Activated B cell treated with CpG ODN at 0.5 μM for 24 hours (primary cell): ENCODE measurements at regions of chr9 and their contacts with region 1.

Region 1: DNA sequence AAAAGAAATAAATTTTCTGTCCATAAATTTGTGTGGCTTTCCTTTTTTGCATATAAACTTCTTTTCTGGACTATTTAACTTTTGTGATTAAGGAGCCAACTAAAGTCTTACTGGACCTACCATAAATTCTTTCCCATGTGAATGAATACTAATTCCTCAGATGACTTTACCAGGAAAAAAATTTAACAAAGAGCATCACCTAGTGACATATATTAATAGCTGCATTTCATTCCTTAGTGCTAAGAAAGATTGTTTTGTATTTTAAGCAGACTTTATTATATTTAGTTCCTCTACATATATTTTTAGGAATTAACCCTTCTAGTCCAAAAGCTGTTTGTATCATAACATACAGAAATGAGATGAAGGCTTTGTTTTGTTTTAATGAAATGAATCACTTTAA is 64.4 kb downstream of the C9orf85 start:
- DNase-seq: no peak
- ATAC-seq: no peak
- H3K4me3 Mint-ChIP-seq: no peak overlapping the region
- H3K27ac Mint-ChIP-seq: no peak overlapping the region
- H3K4me1 Mint-ChIP-seq: no peaks in the 10 kb centered on the region
- H3K27me3 Mint-ChIP-seq: no peaks in the 10 kb centered on the region
- CTCF ChIP-seq: no peak

Region 2: GRCh38 chr9:71285191-71285656 is 690.6 kb before region 1 on chr9:
- CTCF ChIA-PET with region 1: no interaction called
- POLR2A ChIA-PET with region 1: no interaction called
- intact Hi-C with region 1: loop called (anchors 10 kb)
- DNase-seq: no peak
- ATAC-seq: peak; percentile 61
- H3K4me3 Mint-ChIP-seq: no peak overlapping the region
- H3K27ac Mint-ChIP-seq: no peak overlapping the region
- H3K4me1 Mint-ChIP-seq: no peaks in the 10 kb centered on the region
- H3K27me3 Mint-ChIP-seq: peaks cover 2% of the 10 kb centered on the region
- CTCF ChIP-seq: no peak

Region 3: DNA sequence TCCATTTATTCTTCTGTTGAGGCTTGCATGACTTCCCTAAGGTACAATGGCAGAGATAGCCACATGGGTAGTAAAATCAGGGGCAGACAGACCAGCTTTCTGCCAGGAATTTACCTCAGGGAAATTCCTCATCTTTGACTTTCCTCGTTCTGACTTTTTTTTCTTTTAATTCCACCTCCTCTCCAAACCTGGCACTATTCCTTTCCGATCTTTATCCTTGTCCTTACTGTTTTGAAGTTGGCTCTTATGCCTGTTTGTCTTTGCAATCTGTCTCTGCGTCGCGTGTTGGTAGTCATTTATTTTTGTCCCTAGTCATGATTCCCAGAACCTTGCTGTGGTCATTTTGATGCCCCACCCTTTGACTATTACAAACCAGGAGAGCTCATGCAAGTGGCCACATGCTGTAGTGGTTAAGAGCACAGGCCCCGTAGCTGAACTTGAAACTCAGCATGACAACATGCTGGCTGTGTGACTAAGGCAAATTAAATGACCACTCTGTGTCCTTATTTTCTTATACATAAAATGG is 564.6 kb after region 1 on chr9:
- CTCF ChIA-PET with region 1: no interaction called
- POLR2A ChIA-PET with region 1: no interaction called
- intact Hi-C with region 1: no loop called
- DNase-seq: no peak
- ATAC-seq: no peak
- H3K4me3 Mint-ChIP-seq: no peak overlapping the region
- H3K27ac Mint-ChIP-seq: no peak overlapping the region
- H3K4me1 Mint-ChIP-seq: no peaks in the 10 kb centered on the region
- H3K27me3 Mint-ChIP-seq: peaks cover 2% of the 10 kb centered on the region
- CTCF ChIP-seq: no peak